Testis (tissue), 5 donors: ENCODE measurements at regions of chr4 and their contacts with region 1.

Region 1: GRCh38 chr4:170051402-170051801 is 25.2 kb upstream of the MFAP3L start:
- DNase-seq: no peak
- H3K4me3 ChIP-seq: no peak overlapping the region
- H3K27ac ChIP-seq: no peak overlapping the region
- H3K4me1 ChIP-seq: no peaks in the 10 kb centered on the region
- H3K27me3 ChIP-seq: no peaks in the 10 kb centered on the region
- CTCF ChIP-seq: no peak
- POLR2A ChIP-seq: no peak

Region 2: DNA sequence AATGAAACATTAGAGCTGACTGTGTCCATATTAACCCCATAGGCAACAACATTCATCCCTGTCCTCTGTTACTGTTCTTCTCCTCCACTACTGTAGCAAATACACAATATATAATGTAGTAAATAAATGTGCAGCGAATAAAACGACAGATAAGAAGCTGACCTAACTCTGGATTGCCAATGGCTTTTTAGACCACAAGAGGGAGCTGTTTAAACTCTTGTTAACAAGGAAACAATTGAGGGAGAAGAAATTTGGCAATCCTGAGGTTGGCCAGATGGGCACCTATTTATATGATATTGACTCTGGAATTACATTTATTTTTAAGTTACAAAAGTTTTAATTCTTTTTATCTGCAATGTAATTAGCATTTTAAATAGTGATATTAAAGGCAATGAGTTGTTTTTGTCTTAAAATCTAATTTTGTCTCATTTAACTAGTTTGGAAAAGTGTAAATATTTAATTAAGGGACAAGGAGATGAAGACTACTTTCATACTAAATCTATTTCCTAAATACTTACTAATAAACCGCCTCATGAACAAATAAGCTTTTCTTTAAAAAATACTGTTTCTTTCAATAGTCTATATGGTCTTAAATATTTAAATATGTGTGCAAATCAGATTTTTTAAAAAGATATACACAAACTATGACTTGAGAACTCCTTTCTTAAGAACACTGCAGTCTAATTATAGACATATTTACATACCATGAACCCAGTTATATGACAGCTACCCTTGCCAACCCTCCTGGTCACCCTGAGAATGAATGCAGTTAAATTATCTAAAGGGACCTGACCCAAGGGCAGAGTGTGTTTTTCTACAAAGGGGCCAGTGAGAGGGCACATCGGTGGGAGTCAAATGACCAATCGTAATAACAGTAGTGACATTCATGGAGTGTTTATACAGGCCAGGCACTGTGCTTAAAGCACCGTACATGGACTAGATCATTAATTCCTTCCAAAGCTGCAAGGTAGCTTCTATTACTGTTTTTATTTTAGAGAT is 240.8 kb before region 1 on chr4:
- intact Hi-C with region 1: loop called (anchors 5 kb)
- DNase-seq: peak; percentile 52
- H3K4me3 ChIP-seq: no peak overlapping the region
- H3K27ac ChIP-seq: no peak overlapping the region
- H3K4me1 ChIP-seq: no peaks in the 10 kb centered on the region
- H3K27me3 ChIP-seq: no peaks in the 10 kb centered on the region
- CTCF ChIP-seq: peak; percentile 72 to 87 (median 79)
- POLR2A ChIP-seq: no peak

Region 3: DNA sequence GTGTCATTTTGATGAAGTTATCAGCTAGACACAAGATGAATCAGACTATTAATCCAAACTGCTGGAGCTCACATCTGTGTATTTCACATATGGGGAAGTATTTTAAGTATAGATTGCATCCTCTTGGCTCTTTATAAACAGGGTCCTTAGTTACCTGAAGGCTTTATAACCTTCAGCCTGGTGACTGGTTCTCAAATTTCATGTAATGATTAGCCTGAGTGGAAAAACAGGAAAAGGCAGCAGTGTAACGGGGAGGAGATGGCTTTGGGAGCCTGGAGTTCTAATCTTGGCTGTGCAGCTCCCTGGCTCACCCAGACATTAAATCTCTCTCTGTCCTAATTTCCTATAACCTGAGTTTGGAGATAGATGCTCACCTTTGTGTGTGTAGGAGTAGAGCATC is 189.8 kb before region 1 on chr4:
- intact Hi-C with region 1: no loop called
- DNase-seq: no peak
- H3K4me3 ChIP-seq: no peak overlapping the region
- H3K27ac ChIP-seq: no peak overlapping the region
- H3K4me1 ChIP-seq: no peaks in the 10 kb centered on the region
- H3K27me3 ChIP-seq: no peaks in the 10 kb centered on the region
- CTCF ChIP-seq: no peak
- POLR2A ChIP-seq: no peak